ENCODE measurements at regions of chr11 and their contacts with region 1.

Region 1: GRCh38 chr11:19594326-19594725 is 118.3 kb upstream of the NAV2 start:
- DNase-seq: no peak
- ATAC-seq: no peak

Region 2: DNA sequence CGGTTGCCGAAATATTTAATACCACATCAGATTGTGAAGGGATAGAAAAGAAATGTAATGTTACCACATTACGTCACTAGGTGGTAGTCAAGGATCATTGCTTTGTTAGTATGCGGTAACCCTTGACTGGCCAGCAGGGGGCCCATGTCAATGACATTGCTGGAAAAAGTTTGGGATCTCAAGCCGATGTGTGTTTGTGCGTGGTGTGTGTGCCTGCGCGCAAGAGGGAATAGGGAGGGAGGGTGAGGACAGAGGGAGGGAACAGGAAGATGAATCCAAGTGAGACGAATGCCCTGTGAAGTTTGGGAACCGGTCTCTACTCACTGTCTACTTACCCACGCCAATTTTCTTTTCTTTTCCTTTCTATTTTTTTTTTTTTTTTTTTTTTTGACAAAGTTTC is 523.1 kb before region 1 on chr11:
- intact Hi-C with region 1: no loop called
- DNase-seq: peak; percentile 78
- ATAC-seq: peak; percentile 83 to 96

Region 3: GRCh38 chr11:19474954-19475715 is 119.2 kb before region 1 on chr11:
- intact Hi-C with region 1: no loop called
- DNase-seq: no peak
- ATAC-seq: no peak

Region 4: DNA sequence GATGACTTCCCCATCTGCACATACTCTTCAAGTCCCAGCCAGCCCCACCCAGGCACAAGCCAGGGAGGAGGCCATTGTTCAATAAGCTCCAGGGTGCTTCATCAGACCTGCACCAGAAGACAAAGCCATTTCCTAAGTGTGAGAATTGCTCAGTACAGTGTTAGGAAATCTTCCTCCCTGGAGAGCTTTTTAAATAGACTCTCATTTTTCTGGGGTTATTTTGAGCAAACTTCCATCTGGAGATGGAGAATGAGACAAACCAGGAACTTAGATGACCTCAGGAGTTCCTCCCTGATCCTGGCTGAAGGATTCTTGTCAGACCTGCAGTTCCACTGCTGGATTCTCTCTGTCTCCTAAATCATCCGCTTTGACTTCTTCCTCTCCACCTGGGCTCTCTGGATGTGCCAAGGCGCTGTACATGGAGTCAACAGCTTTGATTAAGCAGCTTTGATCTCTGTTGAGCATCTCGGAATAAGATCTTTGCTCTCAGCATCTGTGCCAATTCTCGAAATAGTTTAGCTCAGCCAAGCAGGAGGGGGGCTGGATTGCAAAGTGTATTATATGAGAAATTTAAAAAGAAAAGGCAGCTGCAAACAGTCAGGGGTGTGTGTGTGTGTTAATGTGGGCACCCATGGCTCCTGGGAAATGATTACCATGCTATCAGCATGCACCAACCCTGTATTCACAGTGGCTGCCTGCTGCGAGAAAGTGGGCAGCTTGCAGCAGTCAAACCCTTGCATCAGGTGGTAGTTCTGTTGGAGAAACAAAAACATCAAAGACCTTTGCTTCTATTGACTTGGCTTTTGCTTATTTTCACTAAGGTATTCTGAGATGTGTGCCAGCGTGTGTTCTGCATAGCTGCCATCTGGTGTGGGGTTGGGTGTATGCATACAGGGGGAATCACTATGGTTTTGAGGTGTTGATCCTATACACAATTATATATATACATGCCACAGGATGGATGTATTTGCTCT is 48.1 kb after region 1 on chr11:
- intact Hi-C with region 1: loop called in 1 of 2 experiments (anchors 5 kb)
- DNase-seq: no peak
- ATAC-seq: peak in 1 of 2 donors; percentile 54

Measured in left cardiac atrium (tissue), 4 donors.